Common myeloid progenitor, CD34-positive (primary cell): ENCODE measurements at regions of chr22 and their contacts with region 1.

Region 1: DNA sequence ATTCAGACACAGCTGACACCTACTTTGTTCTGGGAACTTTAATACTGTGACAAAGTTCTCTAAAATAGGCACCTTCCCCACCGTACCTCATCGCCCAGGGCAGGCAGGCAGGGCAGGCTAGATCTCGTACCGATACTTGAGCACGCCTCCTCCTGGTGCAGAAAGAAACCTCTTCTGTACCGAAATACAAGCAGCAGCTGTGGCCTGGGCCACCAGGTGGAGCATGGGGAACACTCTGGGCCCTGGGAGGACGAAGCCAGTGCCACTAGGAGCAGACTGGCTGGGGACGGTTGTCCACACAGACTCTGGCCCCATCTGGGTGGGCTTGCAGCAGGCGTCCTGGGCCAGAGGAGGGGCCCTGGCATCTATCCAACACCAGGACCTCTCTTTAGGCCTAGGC is 12.8 kb downstream of the PMM1 start:
- DNase-seq: peak; percentile 68 to 79 (median 76)
- H3K4me3 ChIP-seq: no peak overlapping the region
- H3K27ac ChIP-seq: no peak overlapping the region
- H3K4me1 ChIP-seq: no peaks in the 10 kb centered on the region
- H3K27me3 ChIP-seq: peaks cover 0 to 3% (median 0%) of the 10 kb centered on the region in 5 experiments

Region 2: GRCh38 chr22:41532908-41533825 is 43.7 kb before region 1 on chr22:
- CTCF ChIA-PET with region 1: no interaction called
- POLR2A ChIA-PET with region 1: no interaction called
- DNase-seq: peak; percentile 47 to 70 (median 61)
- H3K4me3 ChIP-seq: no peak overlapping the region
- H3K27ac ChIP-seq: no peak overlapping the region
- H3K4me1 ChIP-seq: no peaks in the 10 kb centered on the region
- H3K27me3 ChIP-seq: no peaks in the 10 kb centered on the region

Region 3: DNA sequence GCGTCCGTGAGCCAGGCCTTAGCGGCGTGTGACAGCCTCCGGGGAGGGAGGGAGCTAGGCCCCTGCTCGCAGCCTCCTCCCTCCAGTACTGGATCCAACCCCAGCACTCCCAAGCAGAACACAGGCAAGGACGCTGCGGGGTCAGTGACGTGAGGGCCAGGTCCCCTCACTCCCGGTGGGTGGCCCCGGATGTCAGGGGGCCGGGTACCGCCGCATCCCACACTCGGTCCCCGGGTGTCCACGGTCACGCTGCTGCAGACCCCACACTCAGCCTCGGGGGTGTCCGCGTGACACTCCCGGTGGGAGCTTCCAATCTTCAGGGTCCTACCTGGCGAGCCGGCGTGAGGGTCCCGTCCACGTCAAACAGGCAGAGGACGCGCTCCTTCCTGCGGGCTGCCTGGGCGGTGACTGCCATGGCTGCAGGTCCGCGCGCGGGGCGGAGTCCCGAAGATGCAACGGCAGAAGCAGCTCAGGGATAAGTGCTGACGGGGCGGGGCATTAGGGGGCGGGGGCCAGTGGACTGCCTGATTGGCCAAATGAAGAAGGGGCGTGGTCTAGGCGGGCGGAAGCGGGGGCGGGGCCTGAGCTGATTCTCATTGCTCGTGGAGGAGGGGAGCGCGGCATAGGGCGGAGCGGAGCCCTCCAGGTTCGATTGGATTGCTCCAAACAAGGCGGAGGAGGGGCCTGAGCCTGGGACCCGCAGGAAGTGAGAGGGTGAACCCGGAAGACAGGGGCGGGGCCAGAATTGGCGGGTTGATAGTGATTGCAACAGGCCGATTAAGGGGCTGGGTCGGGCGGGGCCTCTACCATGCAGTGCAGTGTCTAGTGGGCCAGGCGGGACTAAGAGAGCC is 12.7 kb after region 1 on chr22 and contains the start of gene PMM1:
- CTCF ChIA-PET with region 1: interaction called, 13 read pairs
- POLR2A ChIA-PET with region 1: interaction called, 3 read pairs
- DNase-seq: peak; percentile 99 to 100 (median 100)
- H3K4me3 ChIP-seq: peak within 1 kb of the TSS; percentile 50 to 88 (median 73)
- H3K27ac ChIP-seq: peak within 1 kb of the TSS in 1 of 2 experiments; percentile 25
- H3K4me1 ChIP-seq: peaks cover 0 to 13% (median 10%) of the 10 kb centered on the region in 4 experiments
- H3K27me3 ChIP-seq: peaks cover 0 to 12% (median 4%) of the 10 kb centered on the region in 5 experiments